ENCODE measurements at regions of chrX and their contacts with region 1.

Region 1: DNA sequence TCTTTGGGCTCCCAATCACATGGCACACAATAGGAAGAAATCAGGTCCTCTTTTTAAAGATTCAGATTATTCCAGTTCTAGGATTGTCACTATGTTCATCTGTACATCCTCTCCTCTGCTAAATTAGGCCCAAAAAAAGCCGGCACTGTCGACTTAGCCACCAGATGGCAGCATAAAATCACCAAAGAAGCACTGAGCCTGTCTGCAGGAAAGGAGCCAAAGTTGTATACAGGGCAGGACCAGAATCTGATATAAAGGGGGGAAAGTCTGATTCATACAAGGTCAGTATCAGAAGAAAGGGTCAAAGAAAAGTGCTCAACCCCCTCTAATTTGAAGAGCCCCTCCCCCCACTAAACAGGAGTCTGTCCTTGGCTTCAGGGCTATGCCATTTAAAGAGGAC is 292.5 kb downstream of the CHIC1 start:
- DNase-seq: peak; percentile 56 to 79 (median 74)
- H3K4me3 ChIP-seq: no peak overlapping the region
- H3K4me3 Mint-ChIP-seq: no peak overlapping the region
- H3K27ac ChIP-seq: no peak overlapping the region
- H3K27ac Mint-ChIP-seq: no peak overlapping the region
- H3K4me1 ChIP-seq: no peaks in the 10 kb centered on the region
- H3K4me1 Mint-ChIP-seq: peaks cover 0 to 4% (median 0%) of the 10 kb centered on the region in 4 donors
- H3K27me3 ChIP-seq: no peaks in the 10 kb centered on the region
- H3K27me3 Mint-ChIP-seq: no peaks in the 10 kb centered on the region

Region 2: GRCh38 chrX:74015379-74016019 is 160.0 kb after region 1 on chrX:
- CTCF ChIA-PET with region 1: interaction called, 25 read pairs
- POLR2A ChIA-PET with region 1: interaction called, 3 read pairs
- intact Hi-C with region 1: loop called (anchors 1 kb)
- DNase-seq: peak; percentile 47 to 72 (median 71)
- H3K4me3 ChIP-seq: no peak overlapping the region
- H3K4me3 Mint-ChIP-seq: no peak overlapping the region
- H3K27ac ChIP-seq: no peak overlapping the region
- H3K27ac Mint-ChIP-seq: peak overlapping the region in 2 of 7 donors; percentile 33 to 39
- H3K4me1 ChIP-seq: no peaks in the 10 kb centered on the region
- H3K4me1 Mint-ChIP-seq: peaks cover 7 to 14% (median 9%) of the 10 kb centered on the region in 4 donors
- H3K27me3 ChIP-seq: no peaks in the 10 kb centered on the region
- H3K27me3 Mint-ChIP-seq: peaks cover 0 to 1% of the 10 kb centered on the region in 2 donors

Region 3: GRCh38 chrX:74133156-74133796 is 277.7 kb after region 1 on chrX:
- CTCF ChIA-PET with region 1: interaction called, 22 read pairs
- POLR2A ChIA-PET with region 1: no interaction called
- intact Hi-C with region 1: no loop called
- DNase-seq: peak in 4 of 5 donors; percentile 57 to 63 (median 60)
- H3K4me3 ChIP-seq: no peak overlapping the region
- H3K4me3 Mint-ChIP-seq: no peak overlapping the region
- H3K27ac ChIP-seq: no peak overlapping the region
- H3K27ac Mint-ChIP-seq: no peak overlapping the region
- H3K4me1 ChIP-seq: no peaks in the 10 kb centered on the region
- H3K4me1 Mint-ChIP-seq: peaks cover 0 to 2% (median 0%) of the 10 kb centered on the region in 4 donors
- H3K27me3 ChIP-seq: no peaks in the 10 kb centered on the region
- H3K27me3 Mint-ChIP-seq: no peaks in the 10 kb centered on the region

Region 4: DNA sequence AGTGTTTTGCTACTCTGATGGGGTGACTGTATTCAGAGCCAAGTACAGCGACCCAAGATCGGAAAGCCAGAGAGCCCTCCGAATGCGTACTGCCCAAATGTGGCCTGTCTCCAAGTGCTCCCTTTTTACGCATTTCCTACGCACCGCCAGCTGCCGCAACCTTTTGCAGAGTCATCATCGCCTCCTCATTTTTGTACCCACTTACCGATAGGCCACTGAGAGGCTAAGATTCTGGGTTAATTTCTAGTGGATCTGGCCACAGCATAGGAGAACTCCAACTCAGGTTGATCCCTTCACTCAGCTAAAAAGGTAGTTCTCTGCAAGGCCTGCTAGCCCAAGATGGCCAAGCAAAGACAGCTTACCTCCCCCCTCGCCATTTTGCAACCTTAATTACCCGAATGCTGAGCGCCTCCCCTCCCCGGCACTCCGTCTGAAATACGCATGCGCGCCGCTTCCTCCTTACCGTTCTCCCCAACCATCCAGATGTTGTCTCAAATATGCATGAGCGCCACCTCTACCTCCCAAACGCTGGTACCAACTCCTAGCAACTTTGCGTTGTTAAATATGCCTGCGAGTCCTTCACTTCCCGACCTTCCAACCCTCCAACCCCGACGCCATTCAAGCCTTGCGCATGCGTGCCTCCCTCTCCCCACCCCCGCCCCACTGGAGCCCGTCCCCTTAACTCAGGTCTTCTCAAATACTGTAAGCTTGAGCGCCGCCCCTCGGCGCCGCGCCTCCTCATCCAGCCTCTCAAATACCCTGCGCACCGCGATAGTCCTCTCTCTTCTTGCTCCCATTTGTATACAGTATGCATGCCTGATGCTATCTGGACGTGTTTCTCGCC is 436.6 kb after region 1 on chrX:
- CTCF ChIA-PET with region 1: no interaction called
- POLR2A ChIA-PET with region 1: no interaction called
- intact Hi-C with region 1: loop called (anchors 2 kb)
- DNase-seq: peak; percentile 81 to 88 (median 85)
- H3K4me3 ChIP-seq: peak overlapping the region; percentile 94 to 96
- H3K4me3 Mint-ChIP-seq: peak overlapping the region; percentile 90 to 100 (median 96)
- H3K27ac ChIP-seq: peak overlapping the region; percentile 84
- H3K27ac Mint-ChIP-seq: peak overlapping the region; percentile 94 to 98 (median 98)
- H3K4me1 ChIP-seq: peaks cover 28% of the 10 kb centered on the region
- H3K4me1 Mint-ChIP-seq: peaks cover 5 to 34% (median 13%) of the 10 kb centered on the region in 4 donors
- H3K27me3 ChIP-seq: no peaks in the 10 kb centered on the region
- H3K27me3 Mint-ChIP-seq: no peaks in the 10 kb centered on the region

Region 5: DNA sequence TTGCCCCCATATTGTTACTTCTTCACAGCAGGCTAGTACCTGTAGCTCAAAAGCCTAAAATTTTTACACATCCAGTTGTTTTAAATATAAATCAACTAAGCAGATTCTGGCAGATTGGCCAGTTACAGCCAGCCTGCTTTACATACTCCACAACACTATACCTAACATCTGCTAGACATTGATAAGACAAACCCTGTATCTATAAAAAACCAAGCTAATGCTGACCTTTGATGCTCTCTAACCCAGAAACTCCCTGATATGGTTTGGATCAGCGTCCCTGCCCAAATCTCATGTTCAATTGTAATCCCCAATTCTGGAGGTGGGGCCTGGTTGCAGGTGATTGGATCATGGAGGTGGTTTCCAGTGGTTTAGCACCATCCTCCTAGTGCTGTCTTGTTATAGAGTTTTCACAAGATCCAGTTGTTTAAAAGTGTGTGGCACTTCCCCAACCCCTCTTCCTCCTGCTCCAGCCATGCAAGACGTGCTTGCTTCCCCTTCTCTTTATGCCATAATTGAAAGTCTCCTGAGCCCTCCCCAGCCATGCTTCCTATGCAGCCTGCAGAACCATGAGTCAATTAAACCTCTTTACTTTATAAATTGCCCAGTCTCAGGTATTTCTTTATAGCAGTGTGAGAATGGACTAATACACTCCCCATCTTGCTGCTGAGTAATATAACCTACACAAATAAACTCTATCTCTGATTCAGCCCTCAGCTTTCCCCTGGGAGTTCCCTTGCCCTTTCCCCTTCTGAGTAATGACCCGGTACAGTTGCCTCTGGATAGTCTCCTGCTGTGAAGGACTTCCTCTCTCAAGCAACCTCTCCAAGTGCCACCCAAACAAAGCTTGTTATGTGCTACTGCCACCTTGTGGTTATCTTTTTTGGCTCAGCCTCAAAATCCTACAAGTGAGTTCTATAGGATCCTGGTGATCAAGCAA is 488.1 kb after region 1 on chrX:
- CTCF ChIA-PET with region 1: interaction called, 18 read pairs
- POLR2A ChIA-PET with region 1: no interaction called
- intact Hi-C with region 1: loop called (anchors 1 kb)
- DNase-seq: peak; percentile 43 to 57 (median 47)
- H3K4me3 ChIP-seq: no peak overlapping the region
- H3K4me3 Mint-ChIP-seq: no peak overlapping the region
- H3K27ac ChIP-seq: no peak overlapping the region
- H3K27ac Mint-ChIP-seq: no peak overlapping the region
- H3K4me1 ChIP-seq: no peaks in the 10 kb centered on the region
- H3K4me1 Mint-ChIP-seq: no peaks in the 10 kb centered on the region
- H3K27me3 ChIP-seq: no peaks in the 10 kb centered on the region
- H3K27me3 Mint-ChIP-seq: peaks cover 0 to 3% of the 10 kb centered on the region in 2 donors

Region 6: GRCh38 chrX:74382613-74383012 is 527.1 kb after region 1 on chrX:
- CTCF ChIA-PET with region 1: no interaction called
- POLR2A ChIA-PET with region 1: no interaction called
- intact Hi-C with region 1: loop called (anchors 2 kb)
- DNase-seq: peak; percentile 34 to 50 (median 45)
- H3K4me3 ChIP-seq: no peak overlapping the region
- H3K4me3 Mint-ChIP-seq: no peak overlapping the region
- H3K27ac ChIP-seq: no peak overlapping the region
- H3K27ac Mint-ChIP-seq: no peak overlapping the region
- H3K4me1 ChIP-seq: no peaks in the 10 kb centered on the region
- H3K4me1 Mint-ChIP-seq: no peaks in the 10 kb centered on the region
- H3K27me3 ChIP-seq: no peaks in the 10 kb centered on the region
- H3K27me3 Mint-ChIP-seq: peaks cover 0 to 3% of the 10 kb centered on the region in 2 donors